GM10248 (cell line): ENCODE measurements at regions of chr1 and their contacts with region 1.

Region 1: DNA sequence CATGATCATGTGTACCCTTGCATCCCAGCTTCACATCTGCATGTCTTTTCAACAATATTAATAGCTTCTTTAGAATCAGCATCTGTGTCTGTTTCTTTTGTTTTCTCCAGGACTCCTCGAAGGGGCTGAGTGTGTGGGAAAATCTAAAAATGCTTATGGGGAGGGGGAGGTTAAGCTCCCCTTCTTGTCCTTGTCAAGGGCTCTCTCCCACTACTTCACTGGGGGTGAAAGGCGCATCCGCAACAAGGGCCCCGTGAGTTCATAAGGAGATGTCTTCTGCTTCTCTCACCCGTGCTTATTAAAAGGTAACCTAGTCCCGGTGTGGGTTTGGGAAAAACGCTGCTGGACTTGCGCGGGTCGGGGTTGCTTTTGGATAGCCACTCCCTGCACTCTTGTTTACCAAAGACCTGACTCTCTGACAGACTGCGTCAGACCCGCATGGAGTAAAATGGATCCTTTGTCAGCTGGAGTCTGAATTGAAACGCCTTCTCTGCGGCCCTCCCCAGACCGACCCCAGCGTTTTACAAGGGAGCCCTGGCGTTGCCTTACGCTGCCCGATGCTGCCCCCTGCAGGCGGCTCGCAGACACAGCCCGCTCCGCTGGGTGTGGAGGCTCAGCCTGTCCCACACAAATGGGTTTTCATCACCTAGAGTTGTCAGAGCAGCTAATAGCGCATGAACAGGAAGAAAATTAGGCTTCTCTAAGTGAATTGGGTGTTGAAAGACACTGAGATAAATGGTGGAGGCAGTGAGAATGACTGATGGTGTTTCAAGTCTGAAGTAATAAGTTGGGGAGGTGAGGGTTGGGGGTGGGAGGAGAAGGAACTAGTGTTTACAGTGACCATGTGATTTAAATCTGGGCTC is 53.8 kb downstream of the IER5 start:
- DNase-seq: peak; percentile 81
- CTCF ChIP-seq: peak; percentile 98

Region 2: GRCh38 chr1:180881806-180882509 is 260.4 kb before region 1 on chr1:
- CTCF ChIA-PET with region 1: interaction called, 31 read pairs
- POLR2A ChIA-PET with region 1: no interaction called
- DNase-seq: peak; percentile 69
- CTCF ChIP-seq: peak; percentile 30

Region 3: DNA sequence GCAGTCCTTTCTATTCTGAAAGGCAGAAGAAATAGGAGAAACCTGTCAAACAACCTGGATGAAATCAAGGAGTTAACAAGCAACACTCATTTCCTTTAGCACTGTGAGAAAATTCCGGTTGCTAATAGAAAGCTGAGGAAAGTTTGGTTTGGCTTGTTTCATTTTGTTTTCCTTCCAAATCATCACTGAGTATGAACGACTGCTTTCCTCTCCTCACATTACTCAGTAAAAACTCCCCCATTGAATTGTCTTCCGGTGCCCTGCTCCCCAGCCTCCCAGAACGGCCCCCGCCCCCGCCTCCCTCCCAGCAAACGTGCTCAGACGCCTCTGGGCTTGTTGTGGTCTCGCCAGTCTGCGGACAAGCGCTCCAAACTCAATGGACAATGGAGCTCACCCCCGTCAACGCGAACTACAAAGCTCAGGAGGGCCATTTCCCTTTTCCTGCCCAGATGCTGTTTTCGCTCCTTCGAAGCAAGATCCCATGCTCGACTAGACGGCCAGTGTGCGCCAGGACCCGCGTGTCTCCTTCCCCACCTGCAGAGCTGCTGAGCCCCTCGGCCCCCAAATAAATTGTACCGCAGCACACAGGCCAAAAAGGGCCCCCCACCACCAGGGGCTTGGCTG is 120.4 kb before region 1 on chr1:
- CTCF ChIA-PET with region 1: interaction called, 10 read pairs
- POLR2A ChIA-PET with region 1: no interaction called
- DNase-seq: peak; percentile 76
- CTCF ChIP-seq: no peak

Region 4: GRCh38 chr1:181062836-181063428 is 79.4 kb before region 1 on chr1:
- CTCF ChIA-PET with region 1: interaction called, 24 read pairs
- POLR2A ChIA-PET with region 1: no interaction called
- DNase-seq: peak; percentile 58
- CTCF ChIP-seq: no peak

Region 5: DNA sequence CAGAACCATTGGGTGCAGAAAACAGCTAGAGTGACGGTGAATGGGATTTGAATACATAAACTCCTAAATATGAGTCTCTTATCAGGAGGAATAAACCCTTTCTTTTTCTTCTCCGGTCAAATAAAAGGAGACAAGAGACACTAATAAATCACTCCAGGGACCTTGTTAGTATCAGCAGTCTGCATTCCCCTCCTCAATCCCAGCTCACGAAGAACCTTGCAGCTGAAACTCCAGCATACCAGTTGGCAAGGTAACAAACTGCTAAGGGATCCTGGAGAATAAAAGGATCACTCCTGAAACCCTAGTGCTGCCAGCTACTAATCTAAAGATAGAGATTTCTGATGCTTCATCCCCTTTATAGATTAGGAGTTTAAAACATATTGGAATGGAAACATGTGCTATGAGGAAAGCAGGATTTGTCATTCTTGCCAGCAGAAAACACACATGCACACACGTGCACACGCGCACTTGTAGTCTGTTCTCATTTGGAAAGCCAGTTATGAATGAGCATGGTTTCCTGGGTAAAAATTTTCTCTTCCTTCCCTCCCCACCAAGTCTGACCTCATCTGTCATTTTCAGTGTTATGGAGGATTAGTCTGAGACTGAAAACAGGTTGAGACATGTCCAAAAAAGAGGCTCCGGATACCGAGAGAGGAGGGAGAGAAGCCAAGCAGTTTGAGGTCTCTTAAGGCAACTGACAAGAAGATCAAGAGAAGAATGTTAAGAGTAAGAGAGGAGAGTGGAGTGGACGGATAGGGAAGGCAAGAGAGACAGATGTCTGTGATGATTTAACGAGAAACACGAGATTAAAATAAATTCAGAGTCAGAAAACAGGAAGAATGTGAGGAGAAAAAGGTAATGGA is 42.9 kb before region 1 on chr1:
- CTCF ChIA-PET with region 1: interaction called, 107 read pairs
- POLR2A ChIA-PET with region 1: interaction called, 6 read pairs
- DNase-seq: peak; percentile 48
- CTCF ChIP-seq: no peak

Region 6: GRCh38 chr1:181128592-181129497 is 13.5 kb before region 1 on chr1:
- CTCF ChIA-PET with region 1: interaction called, 57 read pairs
- POLR2A ChIA-PET with region 1: no interaction called
- DNase-seq: peak; percentile 70
- CTCF ChIP-seq: no peak

Region 7: DNA sequence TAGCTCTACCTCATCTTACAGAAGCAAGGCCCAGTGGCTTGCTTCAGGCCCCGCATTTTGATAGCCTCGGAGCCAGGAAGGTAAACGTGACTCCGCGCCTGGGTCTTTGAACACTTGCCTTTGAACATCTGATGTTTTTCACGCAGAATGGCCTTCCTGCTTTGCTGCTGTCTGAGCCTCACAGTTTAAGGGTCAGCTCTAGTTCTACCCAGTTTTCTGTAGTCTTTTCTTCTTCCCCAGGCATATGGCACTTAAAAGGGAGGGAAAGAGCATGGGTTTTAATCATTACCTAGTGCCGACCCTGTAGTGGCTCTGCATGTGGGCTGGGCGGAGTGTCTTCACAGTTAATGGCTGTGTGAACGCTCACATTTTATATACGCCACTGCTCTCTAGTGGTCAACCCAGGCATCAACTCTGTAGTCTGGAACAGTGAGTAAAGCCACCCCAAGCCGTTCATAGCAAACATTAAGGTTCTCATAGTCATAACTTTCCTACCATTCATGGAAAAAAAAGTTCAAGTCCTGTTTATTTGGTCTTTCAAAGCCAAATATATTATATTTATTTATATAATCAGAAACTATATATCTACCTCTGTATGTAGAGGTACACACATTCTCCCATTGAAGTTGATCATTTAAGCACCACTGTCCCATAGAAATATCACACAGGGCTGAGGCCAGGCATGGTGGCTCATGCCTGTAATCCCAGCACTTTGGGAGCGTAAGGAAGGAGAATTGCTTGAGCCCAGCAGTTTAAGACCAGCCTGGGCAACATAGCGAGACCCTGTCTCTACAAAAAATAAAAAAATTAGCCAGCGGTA is 24.3 kb after region 1 on chr1:
- CTCF ChIA-PET with region 1: interaction called, 73 read pairs
- POLR2A ChIA-PET with region 1: no interaction called
- DNase-seq: peak; percentile 79
- CTCF ChIP-seq: peak; percentile 86

Region 8: DNA sequence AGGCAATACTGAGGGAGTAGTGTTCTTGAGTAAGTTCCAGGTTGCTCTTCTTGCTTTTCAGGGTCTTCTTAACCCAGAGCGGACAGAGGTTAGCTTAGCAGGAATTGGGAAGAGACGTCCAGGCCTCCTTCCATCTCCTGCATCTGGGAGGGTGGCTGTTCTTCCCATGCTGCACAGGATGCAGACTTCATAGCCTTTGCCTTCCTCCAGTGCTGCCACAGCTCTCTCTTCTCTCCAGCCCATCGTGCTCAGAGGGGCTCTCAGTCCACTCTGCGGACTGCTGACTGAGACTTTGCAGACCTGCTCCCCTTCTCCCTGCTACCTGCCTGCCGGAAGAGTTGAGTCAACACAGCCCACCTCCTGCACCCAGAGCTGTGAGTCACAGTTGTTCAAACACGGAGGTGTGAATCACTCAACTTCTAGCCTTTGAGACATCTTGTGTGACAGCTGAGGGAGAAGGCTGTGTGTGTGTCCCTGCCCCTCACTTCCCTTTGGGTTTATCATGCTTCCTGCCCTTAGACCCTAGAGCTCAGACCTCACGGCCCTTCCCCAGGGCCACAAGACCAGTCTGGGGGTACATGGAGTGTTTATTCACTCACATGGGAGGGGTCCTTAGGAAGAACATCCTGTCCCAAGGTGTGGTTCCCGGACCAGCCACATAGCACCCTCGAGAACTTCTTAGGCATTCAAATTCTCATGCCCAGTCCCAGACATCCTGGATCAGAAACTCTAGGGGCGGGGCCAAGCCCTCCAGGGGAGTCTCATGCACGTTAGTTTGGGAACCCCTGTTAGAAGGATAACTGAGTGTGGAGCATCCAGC is 182.7 kb after region 1 on chr1:
- CTCF ChIA-PET with region 1: no interaction called
- POLR2A ChIA-PET with region 1: no interaction called
- DNase-seq: no peak
- CTCF ChIP-seq: no peak